ENCODE measurements at regions of chr1 and their contacts with region 1.

Region 1: GRCh38 chr1:240608707-240609106 is 3.2 kb downstream of the GREM2 start:
- DNase-seq: no peak
- ATAC-seq: no peak
- H3K4me3 ChIP-seq: no peak overlapping the region
- H3K27ac ChIP-seq: no peak overlapping the region
- H3K4me1 ChIP-seq: peaks cover 3% of the 10 kb centered on the region; the same call in 1 of the 2 replicates
- H3K27me3 ChIP-seq: peaks cover 15% of the 10 kb centered on the region
- CTCF ChIP-seq: peak; percentile 57

Region 2: DNA sequence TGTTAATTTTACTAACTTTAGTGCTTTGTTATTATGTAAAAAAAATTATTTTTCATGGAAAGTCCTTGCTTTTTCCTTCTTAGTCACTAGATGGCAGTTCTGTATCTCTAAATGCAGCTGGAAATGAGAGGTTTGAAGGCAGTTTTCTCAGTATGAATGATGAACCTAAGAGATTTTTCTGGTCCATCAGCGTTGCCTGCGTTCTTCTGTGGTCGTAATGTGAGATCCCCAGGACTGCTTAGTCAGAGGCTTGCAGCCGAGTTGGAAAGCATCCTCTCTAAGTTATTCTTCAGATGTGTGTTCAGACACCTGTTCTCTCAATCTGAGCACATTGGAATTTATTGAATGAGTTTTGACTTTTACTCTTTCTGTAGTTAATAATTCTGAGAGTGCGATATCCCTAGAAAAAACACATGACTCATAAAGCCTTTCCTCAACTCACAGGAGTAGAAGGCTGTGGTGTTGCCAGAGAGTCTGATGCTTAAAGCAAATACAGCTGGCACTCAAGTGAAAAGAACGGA is 417.8 kb before region 1 on chr1:
- CTCF ChIA-PET with region 1: no interaction called
- POLR2A ChIA-PET with region 1: no interaction called
- in situ Hi-C with region 1: no loop called
- intact Hi-C with region 1: loop called (anchors 5 kb)
- DNase-seq: no peak
- ATAC-seq: no peak
- H3K4me3 ChIP-seq: no peak overlapping the region
- H3K27ac ChIP-seq: no peak overlapping the region
- H3K4me1 ChIP-seq: no peaks in the 10 kb centered on the region
- H3K27me3 ChIP-seq: peaks cover 5% of the 10 kb centered on the region; the same call in 1 of the 2 replicates
- CTCF ChIP-seq: peak; percentile 62

Measured in Panc1 (cell line).